GM12878 (cell line): ENCODE measurements at regions of chr19 and their contacts with region 1.

Region 1: GRCh38 chr19:12789904-12790619 is 1.2 kb upstream of the JUNB start:
- DNase-seq: peak; percentile 86
- ATAC-seq: peak; percentile 53
- H3K4me3 ChIP-seq: peak overlapping the region; percentile 87
- H3K27ac ChIP-seq: peak overlapping the region; percentile 99
- H3K4me1 ChIP-seq: peaks cover 47% of the 10 kb centered on the region
- H3K27me3 ChIP-seq: no peaks in the 10 kb centered on the region
- CTCF ChIP-seq: no peak
- EP300 ChIP-seq: 0 out of 4 replicates have a peak, but pooled peaks of 1 of the 2 experiments have one; percentile 9
- POLR2A ChIP-seq: no peak
- RAD21 ChIP-seq: no peak

Region 2: GRCh38 chr19:11090054-11090900 is 1699.8 kb before region 1 on chr19:
- CTCF ChIA-PET with region 1: no interaction called
- POLR2A ChIA-PET with region 1: no interaction called
- RAD21 ChIA-PET with region 1: no interaction called
- SMC1A ChIA-PET with region 1: no interaction called
- in situ Hi-C with region 1: no loop called
- intact Hi-C with region 1: loop called (anchors 10 kb)
- DNase-seq: peak; percentile 76
- ATAC-seq: peak; percentile 88
- H3K4me3 ChIP-seq: peak overlapping the region; percentile 97
- H3K27ac ChIP-seq: peak overlapping the region; percentile 91
- H3K4me1 ChIP-seq: peaks cover 35% of the 10 kb centered on the region
- H3K27me3 ChIP-seq: no peaks in the 10 kb centered on the region
- CTCF ChIP-seq: peak in 2 of 3 experiments; percentile 12 to 16; a peak in 1 of 6 replicates
- EP300 ChIP-seq: no peak
- POLR2A ChIP-seq: peak; percentile 96
- RAD21 ChIP-seq: no peak

Region 3: DNA sequence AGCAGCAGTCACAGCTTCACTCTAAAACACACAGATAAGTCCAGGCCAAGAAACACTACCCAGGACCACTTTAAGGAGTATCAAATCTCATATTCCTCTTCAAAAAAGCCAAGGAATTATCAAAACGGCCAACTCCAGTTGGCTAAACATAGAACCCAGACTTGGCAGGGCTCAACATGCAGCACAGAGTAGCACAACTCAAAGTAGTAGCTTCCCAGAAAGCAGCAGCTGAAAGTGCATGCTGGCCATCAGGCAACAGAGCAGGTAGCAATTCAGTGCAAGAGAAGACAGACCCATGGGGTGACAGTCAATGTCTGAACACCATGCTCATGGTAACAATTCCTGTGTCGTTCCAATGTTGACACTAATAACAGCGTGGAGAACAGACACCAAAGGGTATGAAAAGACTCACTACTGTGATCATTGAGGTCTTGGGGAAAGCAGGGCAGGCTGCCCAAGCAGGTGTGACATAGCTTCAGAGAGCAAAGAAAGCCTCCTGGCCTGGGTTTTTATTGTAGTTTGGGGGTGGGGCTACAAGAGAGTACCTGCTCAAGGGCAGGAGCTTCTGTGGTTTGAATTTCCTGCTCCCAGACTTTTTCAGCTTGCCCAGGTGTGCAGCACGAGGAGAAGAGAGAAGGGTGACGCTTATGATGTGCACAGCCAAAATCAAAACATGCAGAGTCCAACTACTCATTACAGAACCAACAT is 311.7 kb before region 1 on chr19:
- CTCF ChIA-PET with region 1: no interaction called
- POLR2A ChIA-PET with region 1: no interaction called
- RAD21 ChIA-PET with region 1: no interaction called
- SMC1A ChIA-PET with region 1: no interaction called
- in situ Hi-C with region 1: no loop called
- intact Hi-C with region 1: no loop called
- DNase-seq: no peak
- ATAC-seq: no peak
- H3K4me3 ChIP-seq: no peak overlapping the region
- H3K27ac ChIP-seq: no peak overlapping the region
- H3K4me1 ChIP-seq: no peaks in the 10 kb centered on the region
- H3K27me3 ChIP-seq: no peaks in the 10 kb centered on the region
- CTCF ChIP-seq: no peak
- EP300 ChIP-seq: no peak
- POLR2A ChIP-seq: no peak
- RAD21 ChIP-seq: no peak

Region 4: DNA sequence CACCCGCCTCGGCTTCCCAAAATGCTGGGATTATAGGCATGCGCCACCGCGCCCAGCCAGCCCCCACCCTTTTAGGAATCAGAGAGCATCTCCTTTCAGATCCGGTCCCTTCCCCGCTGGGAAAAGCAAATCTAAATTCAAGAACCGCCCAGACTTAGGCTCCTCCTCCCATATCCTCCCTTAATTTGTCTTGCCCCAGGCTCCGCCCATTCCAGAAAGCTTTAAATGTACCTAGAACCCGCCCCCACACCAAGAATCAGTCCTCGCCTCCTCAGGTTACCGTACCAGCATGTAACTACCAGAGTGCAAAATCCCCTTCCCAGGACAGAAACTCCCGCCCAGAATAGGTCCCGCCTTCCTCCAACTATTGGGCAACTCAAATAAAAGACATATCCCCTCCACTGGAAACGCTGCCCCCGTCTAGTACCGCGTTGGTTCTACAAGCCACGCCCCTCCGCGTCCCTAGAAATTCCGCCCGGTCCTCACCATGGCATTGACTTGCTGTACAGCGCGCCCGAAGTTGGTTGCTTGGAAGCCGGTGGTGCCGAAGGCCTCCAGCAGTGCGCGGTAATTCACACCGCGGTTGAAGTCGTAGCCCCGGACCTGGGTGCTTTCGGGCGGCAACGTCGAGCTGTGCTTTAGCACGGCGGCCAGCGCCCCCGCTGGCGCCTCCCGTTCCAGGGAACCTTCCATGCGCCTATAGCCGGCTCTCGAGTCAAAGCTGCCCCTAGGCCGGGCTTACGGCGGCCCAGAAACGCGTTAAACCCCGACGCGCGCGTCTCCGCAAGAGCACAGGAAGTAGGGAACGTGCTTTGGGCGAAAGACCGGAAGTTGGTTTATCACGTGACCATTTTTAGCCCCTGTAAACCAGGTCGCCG is 108.7 kb before region 1 on chr19 and contains the start of gene DHPS:
- CTCF ChIA-PET with region 1: no interaction called
- POLR2A ChIA-PET with region 1: interaction called, 7 read pairs
- RAD21 ChIA-PET with region 1: no interaction called
- SMC1A ChIA-PET with region 1: no interaction called
- in situ Hi-C with region 1: no loop called
- intact Hi-C with region 1: loop called (anchors 1 kb)
- DNase-seq: peak; percentile 95
- ATAC-seq: peak; percentile 91
- H3K4me3 ChIP-seq: peak within 1 kb of the TSS; percentile 99
- H3K27ac ChIP-seq: peak within 1 kb of the TSS; percentile 98
- H3K4me1 ChIP-seq: peaks cover 4% of the 10 kb centered on the region; the same call in 1 of the 2 replicates
- H3K27me3 ChIP-seq: no peaks in the 10 kb centered on the region
- CTCF ChIP-seq: no peak
- EP300 ChIP-seq: no peak
- POLR2A ChIP-seq: peak; percentile 98
- RAD21 ChIP-seq: no peak
- polyA plus RNA-seq, gene DHPS: 36.4 to 76.0 TPM

Region 5: GRCh38 chr19:12736995-12737834 is 52.8 kb before region 1 on chr19 and contains the start of gene GET3:
- CTCF ChIA-PET with region 1: interaction called, 19 read pairs
- POLR2A ChIA-PET with region 1: interaction called, 11 read pairs
- RAD21 ChIA-PET with region 1: interaction called, 3 read pairs
- SMC1A ChIA-PET with region 1: interaction called, 3 read pairs
- in situ Hi-C with region 1: no loop called
- intact Hi-C with region 1: no loop called
- DNase-seq: peak; percentile 99
- ATAC-seq: peak; percentile 92
- H3K4me3 ChIP-seq: peak within 1 kb of the TSS; percentile 90
- H3K27ac ChIP-seq: peak within 1 kb of the TSS; percentile 98
- H3K4me1 ChIP-seq: peaks cover 19% of the 10 kb centered on the region
- H3K27me3 ChIP-seq: no peaks in the 10 kb centered on the region
- CTCF ChIP-seq: no peak
- EP300 ChIP-seq: no peak
- POLR2A ChIP-seq: peak; percentile 93
- RAD21 ChIP-seq: no peak
- polyA plus RNA-seq, gene GET3: 14.5 to 22.0 TPM

Region 6: DNA sequence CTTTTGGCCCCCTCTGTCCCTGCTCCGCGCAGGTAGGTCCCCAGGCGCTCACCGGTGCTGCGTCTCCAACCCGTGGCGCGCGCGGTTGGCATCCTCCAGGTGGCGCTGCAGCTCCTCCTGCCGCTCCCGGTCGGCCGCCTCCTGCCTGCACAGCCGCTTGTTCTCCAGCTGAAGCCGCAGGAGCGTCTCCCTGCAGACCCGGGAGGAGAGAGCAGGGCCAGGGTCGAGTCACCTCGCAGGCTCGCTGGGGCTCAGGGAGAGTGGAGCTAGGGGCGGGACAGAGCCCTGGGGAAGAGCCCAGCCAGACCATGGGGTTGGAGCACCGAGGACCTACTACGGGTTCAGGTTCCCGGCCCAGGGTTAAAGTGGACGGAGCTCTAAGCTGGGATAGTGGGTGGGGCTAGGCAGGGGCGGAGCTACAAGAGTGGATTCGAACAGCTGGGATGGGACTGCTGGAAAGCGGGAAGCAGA is 24.0 kb before region 1 on chr19:
- CTCF ChIA-PET with region 1: interaction called, 426 read pairs
- POLR2A ChIA-PET with region 1: interaction called, 4 read pairs
- RAD21 ChIA-PET with region 1: interaction called, 28 read pairs
- SMC1A ChIA-PET with region 1: interaction called, 61 read pairs
- in situ Hi-C with region 1: loop called (anchors 5 kb)
- intact Hi-C with region 1: no loop called
- DNase-seq: no peak
- ATAC-seq: peak; percentile 94
- H3K4me3 ChIP-seq: peak overlapping the region; percentile 49; the same call in 1 of the 2 replicates
- H3K27ac ChIP-seq: no peak overlapping the region
- H3K4me1 ChIP-seq: no peaks in the 10 kb centered on the region; the same call in 1 of the 2 replicates
- H3K27me3 ChIP-seq: no peaks in the 10 kb centered on the region; a peak in 1 of 4 replicates
- CTCF ChIP-seq: peak; percentile 80 to 96 (median 86)
- EP300 ChIP-seq: no peak
- POLR2A ChIP-seq: no peak
- RAD21 ChIP-seq: peak; percentile 65

Region 7: DNA sequence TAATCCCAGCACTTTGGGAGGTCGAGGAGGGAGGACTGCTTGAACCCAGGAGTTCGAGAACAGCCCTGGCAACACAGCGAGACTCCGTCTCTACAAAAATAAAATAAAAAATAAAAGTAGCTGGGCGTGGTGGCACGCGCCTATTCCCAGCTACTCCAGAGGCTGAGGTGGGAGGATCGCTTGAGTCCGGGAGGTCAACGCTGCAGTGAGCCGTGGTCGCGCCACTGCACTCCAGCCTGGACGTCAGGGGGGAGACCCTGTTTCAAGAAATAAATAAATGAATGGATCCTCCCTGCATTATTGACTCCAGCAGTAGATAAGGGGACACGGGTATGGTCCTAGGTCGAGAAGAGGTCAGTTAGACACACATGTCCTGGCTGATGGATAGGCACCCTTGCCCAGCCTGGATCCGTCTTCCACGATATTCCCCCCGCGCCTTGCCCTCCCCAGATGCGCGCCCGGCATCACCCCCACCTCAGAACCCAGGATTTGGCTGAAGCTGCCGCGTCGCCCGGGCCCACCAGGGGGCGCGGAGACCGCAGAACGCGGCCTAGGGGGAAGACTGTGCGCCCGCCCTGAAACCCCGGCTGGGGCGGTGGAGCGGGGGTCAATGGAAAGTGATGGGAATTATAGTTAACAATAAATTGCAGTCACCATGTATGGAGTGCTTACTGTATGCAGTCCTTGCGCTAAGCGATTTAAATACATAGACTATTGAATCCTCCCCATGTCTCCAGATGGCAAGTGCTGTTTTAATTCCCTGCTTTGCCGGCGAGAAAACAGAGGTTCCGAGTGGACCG is 12.6 kb before region 1 on chr19:
- CTCF ChIA-PET with region 1: interaction called, 537 read pairs
- POLR2A ChIA-PET with region 1: interaction called, 303 read pairs
- RAD21 ChIA-PET with region 1: interaction called, 303 read pairs
- SMC1A ChIA-PET with region 1: interaction called, 240 read pairs
- in situ Hi-C with region 1: no loop called
- intact Hi-C with region 1: loop called (anchors 1 kb)
- DNase-seq: no peak
- ATAC-seq: peak; percentile 68
- H3K4me3 ChIP-seq: peak overlapping the region; percentile 76
- H3K27ac ChIP-seq: peak overlapping the region; percentile 91
- H3K4me1 ChIP-seq: peaks cover 30% of the 10 kb centered on the region
- H3K27me3 ChIP-seq: no peaks in the 10 kb centered on the region
- CTCF ChIP-seq: peak; percentile 90 to 98 (median 95)
- EP300 ChIP-seq: no peak
- POLR2A ChIP-seq: no peak
- RAD21 ChIP-seq: peak; percentile 89

Region 8: DNA sequence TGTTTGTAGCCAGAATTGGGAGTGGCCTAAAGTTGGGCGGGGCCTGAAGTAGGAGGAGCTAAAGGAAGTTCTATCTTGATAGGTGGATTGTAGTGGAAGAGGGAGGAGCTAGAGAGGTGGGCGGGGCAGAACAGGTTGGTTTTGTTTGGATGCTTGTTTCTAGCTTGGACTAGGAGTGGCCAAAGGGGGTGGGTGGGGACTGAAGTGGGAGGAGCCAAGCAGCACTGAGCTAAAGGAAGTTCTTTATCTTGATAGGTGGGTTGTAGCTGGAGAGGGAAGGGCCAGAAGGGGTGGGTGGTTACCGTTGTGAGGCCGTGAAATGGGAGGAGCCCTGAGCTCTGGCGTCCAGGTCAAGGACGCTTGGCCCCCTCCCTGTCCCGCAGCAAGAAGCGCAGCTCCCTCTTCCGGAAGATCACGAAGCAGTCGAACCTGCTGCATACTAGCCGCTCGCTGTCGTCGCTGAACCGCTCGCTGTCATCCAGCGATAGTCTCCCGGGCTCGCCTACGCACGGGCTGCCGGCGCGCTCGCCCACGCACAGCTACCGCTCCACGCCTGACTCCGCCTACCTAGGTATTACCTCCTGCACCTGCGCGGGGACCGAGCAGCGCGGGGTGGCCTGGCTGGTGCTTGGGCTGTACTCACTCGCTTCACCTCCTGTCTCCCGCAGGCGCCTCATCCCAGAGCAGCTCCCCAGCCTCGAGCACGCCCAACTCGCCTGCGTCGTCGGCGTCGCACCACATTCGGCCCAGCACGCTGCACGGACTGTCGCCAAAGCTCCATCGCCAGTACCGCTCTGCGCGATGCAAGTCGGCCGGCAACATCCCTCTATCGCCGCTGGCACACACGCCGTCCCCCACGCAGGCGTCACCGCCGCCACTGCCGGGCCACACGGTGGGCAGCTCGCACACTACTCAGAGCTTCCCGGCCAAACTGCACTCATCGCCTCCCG is 83.2 kb after region 1 on chr19:
- CTCF ChIA-PET with region 1: no interaction called
- POLR2A ChIA-PET with region 1: no interaction called
- RAD21 ChIA-PET with region 1: no interaction called
- SMC1A ChIA-PET with region 1: no interaction called
- in situ Hi-C with region 1: no loop called
- intact Hi-C with region 1: no loop called
- DNase-seq: no peak
- ATAC-seq: peak; percentile 80
- H3K4me3 ChIP-seq: no peak overlapping the region
- H3K27ac ChIP-seq: no peak overlapping the region
- H3K4me1 ChIP-seq: no peaks in the 10 kb centered on the region
- H3K27me3 ChIP-seq: no peaks in the 10 kb centered on the region
- CTCF ChIP-seq: no peak
- EP300 ChIP-seq: no peak
- POLR2A ChIP-seq: peak; percentile 44; the same call in 1 of the 2 replicates
- RAD21 ChIP-seq: no peak

Region 9: GRCh38 chr19:12938234-12939025 is 148.4 kb after region 1 on chr19 and contains the start of gene CALR:
- CTCF ChIA-PET with region 1: no interaction called
- POLR2A ChIA-PET with region 1: no interaction called
- RAD21 ChIA-PET with region 1: no interaction called
- SMC1A ChIA-PET with region 1: no interaction called
- in situ Hi-C with region 1: no loop called
- intact Hi-C with region 1: loop called (anchors 5 kb)
- DNase-seq: peak; percentile 97
- ATAC-seq: peak; percentile 92
- H3K4me3 ChIP-seq: peak within 1 kb of the TSS; percentile 90
- H3K27ac ChIP-seq: peak within 1 kb of the TSS; percentile 89
- H3K4me1 ChIP-seq: peaks cover 49% of the 10 kb centered on the region
- H3K27me3 ChIP-seq: no peaks in the 10 kb centered on the region
- CTCF ChIP-seq: peak in 1 of 3 experiments; percentile 10; a peak in 1 of 6 replicates
- EP300 ChIP-seq: peak in 1 of 2 experiments; percentile 8; a peak in 1 of 4 replicates
- POLR2A ChIP-seq: peak; percentile 99
- RAD21 ChIP-seq: no peak
- polyA plus RNA-seq, gene CALR: 202 to 216 TPM